ENCODE measurements at regions of chr12 and their contacts with region 1.

Region 1: DNA sequence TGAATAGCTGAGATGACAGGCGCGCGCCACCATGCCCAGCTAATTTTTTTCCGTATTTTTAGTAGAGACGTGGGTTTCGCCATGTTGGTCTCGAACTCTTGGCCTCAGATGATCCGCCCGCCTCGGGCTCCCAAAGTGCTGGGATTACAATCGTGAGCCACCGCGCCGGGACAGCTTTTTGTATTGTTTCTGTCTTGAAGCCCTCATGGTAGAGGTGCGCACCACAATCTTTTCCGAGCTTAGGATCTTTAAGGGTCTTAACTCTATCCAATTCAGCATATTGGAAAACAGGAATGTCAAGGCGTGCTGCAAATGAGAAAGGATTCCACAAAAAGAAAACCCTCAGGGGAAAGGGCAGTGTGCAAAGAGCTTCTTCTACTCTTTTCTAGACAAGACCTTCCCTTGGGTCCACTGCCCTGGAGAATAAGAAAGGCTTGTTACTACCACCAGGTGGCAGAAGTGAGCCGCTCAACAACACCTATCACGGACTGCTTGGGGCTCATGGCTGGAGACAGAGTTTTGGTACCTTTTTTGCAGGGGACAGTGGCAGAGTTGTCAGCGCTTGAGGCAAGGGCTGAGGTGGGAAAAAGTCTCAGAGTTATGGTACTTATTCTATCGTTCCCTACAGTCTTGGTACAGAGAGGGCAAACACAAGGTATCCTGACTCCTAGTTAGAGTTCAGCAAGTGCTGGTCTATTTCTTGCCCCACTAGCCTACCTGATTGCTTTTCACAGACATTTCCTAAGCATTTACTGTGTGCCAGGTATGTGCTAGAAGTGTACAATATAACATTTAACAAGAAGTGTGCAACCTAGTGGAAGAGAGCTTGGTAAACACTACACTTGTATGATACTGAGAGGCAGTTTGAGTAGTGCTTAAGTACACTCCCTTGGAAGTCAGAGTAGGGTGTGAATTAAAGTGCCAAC is 16.4 kb upstream of the SP7 start:
- DNase-seq: peak; percentile 85
- ATAC-seq: peak; percentile 99
- H3K4me3 Mint-ChIP-seq: no peak overlapping the region
- H3K27ac Mint-ChIP-seq: peak overlapping the region; percentile 76; the same call in 1 of the 2 replicates
- H3K4me1 Mint-ChIP-seq: 0 out of 2 replicates have a peak, but pooled peaks cover 4% of the 10 kb centered on the region
- H3K27me3 Mint-ChIP-seq: peaks cover 2% of the 10 kb centered on the region
- CTCF ChIP-seq: peak; percentile 87

Region 2: DNA sequence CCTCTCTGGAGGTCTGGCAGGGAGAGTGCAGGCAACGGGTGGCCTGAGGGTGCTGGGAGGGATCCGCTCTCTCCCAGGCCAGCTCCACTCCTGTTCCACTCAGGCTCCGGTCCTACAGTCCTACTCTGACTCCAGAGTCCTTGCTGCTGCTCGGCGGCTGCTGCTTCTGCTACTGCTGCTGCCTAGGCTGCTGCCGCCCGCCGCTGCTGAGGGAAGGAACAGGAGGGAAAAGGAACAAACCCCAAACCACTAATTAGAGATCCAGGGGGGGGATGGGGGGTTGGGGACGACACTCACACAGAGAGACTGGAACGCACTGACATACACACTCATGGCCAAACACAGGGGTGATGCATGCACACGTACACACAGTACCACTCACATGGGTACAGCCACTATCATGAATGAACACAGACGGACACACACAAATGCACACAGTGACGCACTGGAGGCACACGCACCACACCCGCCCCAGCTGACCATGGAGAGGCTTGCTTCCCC is 16.4 kb before region 1 on chr12 and contains the start of gene SP7:
- CTCF ChIA-PET with region 1: interaction called, 18 read pairs
- POLR2A ChIA-PET with region 1: no interaction called
- DNase-seq: no peak
- ATAC-seq: peak; percentile 21
- H3K4me3 Mint-ChIP-seq: no peak within 1 kb of the TSS
- H3K27ac Mint-ChIP-seq: no peak within 1 kb of the TSS
- H3K4me1 Mint-ChIP-seq: peaks cover 15% of the 10 kb centered on the region
- H3K27me3 Mint-ChIP-seq: peaks cover 41% of the 10 kb centered on the region
- CTCF ChIP-seq: no peak
- total RNA-seq, gene SP7: 0.09 TPM in 1 of 3 replicates, not detected in the others

Region 3: GRCh38 chr12:53414756-53415417 is 62.3 kb after region 1 on chr12:
- CTCF ChIA-PET with region 1: interaction called, 113 read pairs
- POLR2A ChIA-PET with region 1: no interaction called
- DNase-seq: no peak
- ATAC-seq: no peak; the same call in 1 of the 2 replicates
- H3K4me3 Mint-ChIP-seq: no peak overlapping the region
- H3K27ac Mint-ChIP-seq: no peak overlapping the region
- H3K4me1 Mint-ChIP-seq: peaks cover 21% of the 10 kb centered on the region
- H3K27me3 Mint-ChIP-seq: no peaks in the 10 kb centered on the region
- CTCF ChIP-seq: no peak

Region 4: GRCh38 chr12:53476769-53477209 is 124.2 kb after region 1 on chr12:
- CTCF ChIA-PET with region 1: interaction called, 10 read pairs
- POLR2A ChIA-PET with region 1: interaction called, 3 read pairs
- DNase-seq: no peak
- ATAC-seq: peak; percentile 69
- H3K4me3 Mint-ChIP-seq: no peak overlapping the region
- H3K27ac Mint-ChIP-seq: peak overlapping the region; percentile 89
- H3K4me1 Mint-ChIP-seq: peaks cover 43% of the 10 kb centered on the region
- H3K27me3 Mint-ChIP-seq: no peaks in the 10 kb centered on the region
- CTCF ChIP-seq: peak; percentile 27; the same call in 1 of the 2 replicates

Region 5: GRCh38 chr12:53500776-53501614 is 148.4 kb after region 1 on chr12 and contains the start of gene TARBP2:
- CTCF ChIA-PET with region 1: interaction called, 13 read pairs
- POLR2A ChIA-PET with region 1: no interaction called
- DNase-seq: peak; percentile 98
- ATAC-seq: peak; percentile 74
- H3K4me3 Mint-ChIP-seq: peak within 1 kb of the TSS; percentile 86
- H3K27ac Mint-ChIP-seq: peak within 1 kb of the TSS; percentile 94
- H3K4me1 Mint-ChIP-seq: peaks cover 40% of the 10 kb centered on the region
- H3K27me3 Mint-ChIP-seq: no peaks in the 10 kb centered on the region
- CTCF ChIP-seq: no peak
- total RNA-seq, gene TARBP2: 69.0 to 74.0 TPM (median 69.1 TPM) in 3 replicates